B cell (primary cell): ENCODE measurements at regions of chr21 and their contacts with region 1.

Region 1: DNA sequence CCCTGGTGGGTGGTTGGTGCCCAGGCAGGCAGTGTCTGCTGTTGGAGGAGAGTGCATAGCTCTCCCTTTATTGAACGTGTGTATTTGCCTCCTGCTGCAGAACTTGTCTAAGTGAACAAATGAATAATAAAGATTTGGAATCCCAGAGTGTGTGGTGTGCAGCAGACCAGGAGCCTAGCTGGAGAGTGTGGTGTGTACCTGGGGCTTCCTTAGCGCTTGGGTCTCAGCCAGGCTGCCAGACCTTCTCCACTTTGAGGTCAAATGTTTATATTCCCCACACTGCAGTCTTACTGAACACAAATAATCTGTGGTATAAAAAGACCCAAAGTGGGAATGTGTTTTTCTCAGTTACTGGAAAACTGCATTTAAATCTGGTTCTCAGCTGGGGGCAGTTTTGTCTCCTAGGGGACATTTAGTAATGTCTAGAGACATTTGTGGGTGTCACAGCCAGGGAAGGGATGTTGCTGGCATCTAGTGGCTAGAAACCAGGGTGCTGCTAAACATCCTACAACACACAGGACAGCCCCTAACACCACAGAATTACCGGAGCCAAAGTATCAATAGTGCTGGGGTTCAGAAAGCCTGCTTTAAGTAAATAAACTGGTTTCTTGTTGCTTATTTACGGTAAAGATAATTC is 23.6 kb downstream of the SLC37A1 start:
- DNase-seq: peak; percentile 69
- ATAC-seq: no peak
- H3K4me3 ChIP-seq: no peak overlapping the region
- H3K4me3 Mint-ChIP-seq: peak overlapping the region; percentile 17
- H3K27ac ChIP-seq: peak overlapping the region in 1 of 2 donors; percentile 88
- H3K27ac Mint-ChIP-seq: peak overlapping the region; percentile 84
- H3K4me1 ChIP-seq: peaks cover 51% of the 10 kb centered on the region in 2 donors
- H3K4me1 Mint-ChIP-seq: peaks cover 58% of the 10 kb centered on the region
- H3K27me3 ChIP-seq: no peaks in the 10 kb centered on the region
- H3K27me3 Mint-ChIP-seq: no peaks in the 10 kb centered on the region
- CTCF ChIP-seq: peak; percentile 72

Region 2: GRCh38 chr21:42062236-42063022 is 474.8 kb before region 1 on chr21:
- CTCF ChIA-PET with region 1: no interaction called
- POLR2A ChIA-PET with region 1: no interaction called
- intact Hi-C with region 1: loop called (anchors 5 kb)
- DNase-seq: peak; percentile 94
- ATAC-seq: peak; percentile 73
- H3K4me3 ChIP-seq: peak overlapping the region; percentile 3 to 79 (median 65)
- H3K4me3 Mint-ChIP-seq: peak overlapping the region; percentile 91
- H3K27ac ChIP-seq: peak overlapping the region; percentile 87 to 96
- H3K27ac Mint-ChIP-seq: peak overlapping the region; percentile 99
- H3K4me1 ChIP-seq: peaks cover 64 to 95% of the 10 kb centered on the region in 2 donors
- H3K4me1 Mint-ChIP-seq: peaks cover 82% of the 10 kb centered on the region
- H3K27me3 ChIP-seq: no peaks in the 10 kb centered on the region
- H3K27me3 Mint-ChIP-seq: no peaks in the 10 kb centered on the region
- CTCF ChIP-seq: no peak

Region 3: DNA sequence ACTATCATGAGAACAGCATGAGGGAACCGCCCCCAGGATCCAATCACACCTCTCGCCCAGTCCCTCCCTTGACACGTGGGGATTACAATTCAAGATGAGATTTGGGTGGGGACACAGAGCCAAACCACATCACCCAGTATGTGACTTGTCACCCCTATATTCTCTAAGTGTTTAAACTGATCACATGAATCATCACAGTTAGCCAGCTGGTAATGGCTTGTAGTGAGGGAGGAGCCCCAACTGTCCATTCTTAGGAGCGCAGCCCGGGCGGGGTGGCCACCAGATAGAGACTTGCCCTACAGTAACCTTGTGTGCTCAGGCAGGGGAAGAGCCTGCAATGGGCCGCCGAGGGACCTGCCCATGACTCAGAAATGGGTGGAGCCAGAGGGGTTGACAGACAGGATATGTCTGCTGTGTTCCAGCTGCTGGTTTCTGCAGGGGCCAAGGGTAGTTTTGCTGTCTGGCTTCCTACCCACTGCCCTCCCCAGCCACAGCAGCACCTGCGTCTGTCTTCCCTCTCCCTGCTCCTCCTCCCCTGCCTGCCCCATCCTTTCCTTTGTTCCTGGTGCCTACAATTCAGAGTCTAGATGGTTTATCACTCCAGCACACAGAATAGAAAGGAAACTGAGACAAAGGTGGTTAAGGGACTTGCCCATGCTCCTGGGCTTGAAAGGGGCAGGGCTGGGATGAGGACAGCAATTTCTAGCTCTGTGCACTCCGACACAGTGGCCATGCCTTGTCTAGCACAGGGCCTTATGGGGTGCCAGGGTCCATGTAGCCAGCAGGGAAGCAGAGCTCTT is 309.1 kb before region 1 on chr21:
- CTCF ChIA-PET with region 1: no interaction called
- POLR2A ChIA-PET with region 1: interaction called, 3 read pairs
- intact Hi-C with region 1: loop called (anchors 1 kb)
- DNase-seq: peak; percentile 92
- ATAC-seq: peak; percentile 91
- H3K4me3 ChIP-seq: no peak overlapping the region
- H3K4me3 Mint-ChIP-seq: peak overlapping the region; percentile 74
- H3K27ac ChIP-seq: peak overlapping the region; percentile 57 to 68
- H3K27ac Mint-ChIP-seq: peak overlapping the region; percentile 88
- H3K4me1 ChIP-seq: peaks cover 39 to 54% of the 10 kb centered on the region in 2 donors
- H3K4me1 Mint-ChIP-seq: peaks cover 71% of the 10 kb centered on the region
- H3K27me3 ChIP-seq: no peaks in the 10 kb centered on the region
- H3K27me3 Mint-ChIP-seq: no peaks in the 10 kb centered on the region
- CTCF ChIP-seq: no peak

Region 4: DNA sequence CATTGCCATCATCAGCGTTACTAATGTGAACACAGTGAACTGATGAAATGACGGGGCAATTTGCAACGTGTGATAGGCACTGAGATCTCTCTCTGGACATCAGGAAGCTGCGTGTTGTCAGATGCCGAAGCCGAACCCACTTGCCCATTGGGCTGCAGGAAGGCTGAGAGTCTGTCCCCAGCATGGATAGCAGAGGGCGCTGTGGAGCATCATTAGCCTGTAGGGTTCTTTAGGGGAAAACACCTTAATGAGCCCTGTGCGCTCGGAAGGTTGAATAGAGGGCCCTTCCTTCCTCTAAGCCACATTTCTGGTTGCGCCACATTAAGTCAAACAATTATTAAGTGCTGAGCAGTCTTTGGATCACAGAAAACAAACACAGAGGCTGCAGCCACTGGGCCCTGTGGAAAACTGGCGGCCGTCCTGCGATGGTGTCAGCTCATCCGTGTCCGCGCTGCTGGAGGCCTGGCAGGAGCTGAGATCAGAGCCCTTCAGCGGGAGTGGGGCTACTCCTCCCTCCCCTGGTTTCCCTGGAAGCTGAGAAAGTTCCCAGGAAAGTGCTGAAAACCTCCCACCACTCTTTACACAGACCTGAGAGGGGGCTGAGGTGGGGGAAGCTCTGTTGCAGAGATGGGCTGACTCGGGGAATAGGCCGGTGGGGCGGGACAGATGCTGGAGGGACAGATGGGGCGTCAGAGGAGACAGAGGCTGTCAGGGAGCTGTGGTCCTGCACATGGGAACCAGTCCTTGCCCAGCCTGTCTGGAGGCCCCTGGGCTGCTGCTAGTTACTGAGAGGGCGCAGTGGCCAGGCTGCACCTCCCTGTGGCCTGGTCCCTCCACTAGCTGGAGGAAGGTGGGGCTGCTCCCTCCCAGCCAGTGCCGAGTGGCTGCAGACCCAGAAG is 199.1 kb before region 1 on chr21:
- CTCF ChIA-PET with region 1: interaction called, 59 read pairs
- POLR2A ChIA-PET with region 1: no interaction called
- intact Hi-C with region 1: no loop called
- DNase-seq: peak; percentile 84
- ATAC-seq: peak; percentile 98
- H3K4me3 ChIP-seq: no peak overlapping the region
- H3K4me3 Mint-ChIP-seq: no peak overlapping the region
- H3K27ac ChIP-seq: no peak overlapping the region
- H3K27ac Mint-ChIP-seq: peak overlapping the region; percentile 11
- H3K4me1 ChIP-seq: peaks cover 7 to 8% of the 10 kb centered on the region in 2 donors
- H3K4me1 Mint-ChIP-seq: peaks cover 8% of the 10 kb centered on the region
- H3K27me3 ChIP-seq: peaks cover 0 to 10% (median 6%) of the 10 kb centered on the region in 4 experiments
- H3K27me3 Mint-ChIP-seq: peaks cover 17% of the 10 kb centered on the region
- CTCF ChIP-seq: peak; percentile 79

Region 5: GRCh38 chr21:42453509-42454229 is 83.6 kb before region 1 on chr21:
- CTCF ChIA-PET with region 1: interaction called, 31 read pairs
- POLR2A ChIA-PET with region 1: no interaction called
- intact Hi-C with region 1: loop called (anchors 1 kb)
- DNase-seq: no peak
- ATAC-seq: no peak
- H3K4me3 ChIP-seq: no peak overlapping the region
- H3K4me3 Mint-ChIP-seq: no peak overlapping the region
- H3K27ac ChIP-seq: no peak overlapping the region
- H3K27ac Mint-ChIP-seq: no peak overlapping the region
- H3K4me1 ChIP-seq: peaks cover 0 to 9% of the 10 kb centered on the region in 2 donors
- H3K4me1 Mint-ChIP-seq: peaks cover 6% of the 10 kb centered on the region
- H3K27me3 ChIP-seq: peaks cover 0 to 12% (median 2%) of the 10 kb centered on the region in 4 experiments
- H3K27me3 Mint-ChIP-seq: no peaks in the 10 kb centered on the region
- CTCF ChIP-seq: no peak

Region 6: DNA sequence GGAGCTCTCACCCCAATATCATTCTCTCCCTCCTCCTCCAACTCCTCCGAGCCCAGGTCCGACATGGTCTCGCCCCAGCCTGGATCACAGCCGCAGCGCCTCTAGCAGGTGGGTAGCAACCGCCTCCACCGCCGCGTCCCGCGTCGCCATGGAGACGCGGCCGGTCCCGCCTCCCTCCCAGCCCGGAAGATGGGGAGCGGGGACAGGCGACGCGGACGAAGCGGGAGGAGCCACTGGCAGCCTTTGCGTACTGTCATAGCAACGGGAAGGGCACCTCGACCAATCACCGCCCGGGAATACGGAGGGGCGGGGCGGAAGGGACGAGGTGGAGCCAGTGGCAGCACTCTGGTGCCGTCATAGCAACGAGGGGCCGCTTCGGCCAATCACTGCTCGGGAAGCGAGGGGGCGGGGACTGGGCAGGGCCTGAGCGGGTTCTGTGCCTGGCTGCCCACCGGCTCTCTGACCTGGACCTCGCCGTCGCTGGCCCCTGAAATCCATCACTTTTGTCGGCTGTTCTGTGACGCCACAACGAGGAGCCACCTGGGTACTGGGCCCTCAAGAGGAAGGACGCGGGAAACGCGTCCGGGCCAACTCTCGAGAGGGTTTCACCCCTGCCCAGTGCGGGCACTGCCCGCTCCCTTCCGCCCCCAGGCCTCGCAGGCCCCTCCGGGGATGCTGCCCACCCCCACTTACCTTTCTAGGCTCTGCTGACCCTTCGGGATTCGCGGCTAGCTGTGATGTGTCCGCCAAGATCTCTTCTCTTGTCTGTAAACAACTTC is 40.9 kb before region 1 on chr21 and contains the start of gene RSPH1:
- CTCF ChIA-PET with region 1: interaction called, 6 read pairs
- POLR2A ChIA-PET with region 1: interaction called, 4 read pairs
- intact Hi-C with region 1: loop called (anchors 1 kb)
- DNase-seq: peak; percentile 99
- ATAC-seq: peak; percentile 96
- H3K4me3 ChIP-seq: peak within 1 kb of the TSS; percentile 59 to 78 (median 74)
- H3K4me3 Mint-ChIP-seq: peak within 1 kb of the TSS; percentile 94
- H3K27ac ChIP-seq: peak within 1 kb of the TSS; percentile 66 to 85
- H3K27ac Mint-ChIP-seq: peak within 1 kb of the TSS; percentile 89
- H3K4me1 ChIP-seq: peaks cover 11 to 13% of the 10 kb centered on the region in 2 donors
- H3K4me1 Mint-ChIP-seq: peaks cover 15% of the 10 kb centered on the region
- H3K27me3 ChIP-seq: peaks cover 0 to 5% (median 0%) of the 10 kb centered on the region in 4 experiments
- H3K27me3 Mint-ChIP-seq: peaks cover 4% of the 10 kb centered on the region
- CTCF ChIP-seq: no peak
- total RNA-seq, gene RSPH1: 0.64 and 1.0 TPM in 2 replicates

Region 7: DNA sequence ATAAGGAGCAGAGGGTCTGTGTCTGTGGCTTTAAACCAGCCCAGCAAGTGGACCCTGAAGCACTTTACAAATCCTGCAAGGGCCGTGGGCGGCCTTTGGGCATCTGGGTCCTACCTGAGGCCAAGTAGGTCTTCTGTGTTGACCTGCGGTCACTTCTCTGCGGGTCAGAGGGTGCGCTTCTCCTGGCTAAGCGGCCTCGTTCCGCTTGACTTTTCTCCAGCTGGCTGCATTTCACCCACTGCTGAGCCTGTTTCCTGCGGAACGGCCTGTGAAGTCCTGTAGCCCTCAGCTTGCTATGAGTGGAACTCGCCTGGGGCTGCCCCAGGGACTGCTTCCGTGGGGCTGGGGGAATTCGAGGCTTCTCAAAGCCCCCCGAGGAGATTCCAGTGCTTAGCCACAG is 19.7 kb after region 1 on chr21:
- CTCF ChIA-PET with region 1: no interaction called
- POLR2A ChIA-PET with region 1: no interaction called
- intact Hi-C with region 1: loop called (anchors 2 kb)
- DNase-seq: peak; percentile 46
- ATAC-seq: peak; percentile 60
- H3K4me3 ChIP-seq: no peak overlapping the region
- H3K4me3 Mint-ChIP-seq: no peak overlapping the region
- H3K27ac ChIP-seq: no peak overlapping the region
- H3K27ac Mint-ChIP-seq: peak overlapping the region; percentile 26
- H3K4me1 ChIP-seq: peaks cover 1 to 26% of the 10 kb centered on the region in 2 donors
- H3K4me1 Mint-ChIP-seq: peaks cover 24% of the 10 kb centered on the region
- H3K27me3 ChIP-seq: no peaks in the 10 kb centered on the region
- H3K27me3 Mint-ChIP-seq: no peaks in the 10 kb centered on the region
- CTCF ChIP-seq: no peak